ENCODE measurements at regions of chr11 and their contacts with region 1.

Region 1: GRCh38 chr11:60775420-60775961 is 9.6 kb upstream of the MS4A10 start:
- DNase-seq: peak; percentile 85
- H3K4me3 ChIP-seq: peak overlapping the region in 1 of 2 experiments; percentile 45; a peak in 1 of 4 replicates
- H3K27ac ChIP-seq: no peak overlapping the region
- H3K4me1 ChIP-seq: peaks cover 3 to 6% of the 10 kb centered on the region in 2 experiments; a peak in 2 of 4 replicates
- H3K27me3 ChIP-seq: no peaks in the 10 kb centered on the region
- CTCF ChIP-seq: peak; percentile 94
- EP300 ChIP-seq: no peak
- RAD21 ChIP-seq: peak; percentile 83

Region 2: DNA sequence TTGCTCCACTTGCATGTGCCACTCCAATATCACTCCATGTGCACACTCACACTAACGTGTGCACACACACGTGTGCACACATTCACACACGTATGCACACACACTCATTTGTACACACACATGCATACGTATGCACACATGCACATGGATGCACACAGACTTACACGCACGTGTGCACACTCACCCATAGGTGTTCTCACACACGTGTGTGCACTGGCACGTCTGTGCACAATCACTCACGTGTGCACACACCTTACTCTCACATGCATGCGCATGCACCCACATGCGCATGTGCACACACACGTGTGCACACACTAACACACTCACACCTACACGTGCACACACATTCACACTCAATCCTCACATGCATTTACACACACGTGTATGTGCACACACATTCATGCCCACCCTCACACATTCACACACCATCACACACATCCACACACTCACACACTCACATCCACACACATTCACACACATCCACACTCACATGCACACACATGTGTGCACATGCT is 28.1 kb before region 1 on chr11:
- CTCF ChIA-PET with region 1: interaction called, 10 read pairs
- POLR2A ChIA-PET with region 1: no interaction called
- DNase-seq: no peak
- H3K4me3 ChIP-seq: no peak overlapping the region
- H3K27ac ChIP-seq: no peak overlapping the region
- H3K4me1 ChIP-seq: no peaks in the 10 kb centered on the region
- H3K27me3 ChIP-seq: peaks cover 23% of the 10 kb centered on the region; the same call in 1 of the 2 replicates
- CTCF ChIP-seq: no peak
- EP300 ChIP-seq: no peak
- RAD21 ChIP-seq: no peak

Region 3: GRCh38 chr11:60762851-60763691 is 12.4 kb before region 1 on chr11:
- CTCF ChIA-PET with region 1: interaction called, 67 read pairs
- POLR2A ChIA-PET with region 1: no interaction called
- DNase-seq: no peak
- H3K4me3 ChIP-seq: no peak overlapping the region
- H3K27ac ChIP-seq: no peak overlapping the region
- H3K4me1 ChIP-seq: no peaks in the 10 kb centered on the region; a peak in 1 of 4 replicates
- H3K27me3 ChIP-seq: peaks cover 68% of the 10 kb centered on the region
- CTCF ChIP-seq: peak; percentile 49
- EP300 ChIP-seq: no peak
- RAD21 ChIP-seq: no peak

Region 4: GRCh38 chr11:60795291-60795690 is 19.8 kb after region 1 on chr11:
- CTCF ChIA-PET with region 1: interaction called, 11 read pairs
- POLR2A ChIA-PET with region 1: no interaction called
- DNase-seq: no peak
- H3K4me3 ChIP-seq: no peak overlapping the region
- H3K27ac ChIP-seq: no peak overlapping the region
- H3K4me1 ChIP-seq: no peaks in the 10 kb centered on the region
- H3K27me3 ChIP-seq: peaks cover 27% of the 10 kb centered on the region; the same call in 1 of the 2 replicates
- CTCF ChIP-seq: no peak
- EP300 ChIP-seq: no peak
- RAD21 ChIP-seq: no peak

Region 5: GRCh38 chr11:60887556-60887955 is 112.1 kb after region 1 on chr11:
- CTCF ChIA-PET with region 1: interaction called, 28 read pairs
- POLR2A ChIA-PET with region 1: no interaction called
- DNase-seq: peak; percentile 63
- H3K4me3 ChIP-seq: no peak overlapping the region; a peak in 1 of 4 replicates
- H3K27ac ChIP-seq: no peak overlapping the region
- H3K4me1 ChIP-seq: peaks cover 0 to 11% of the 10 kb centered on the region in 2 experiments; a peak in 1 of 4 replicates
- H3K27me3 ChIP-seq: no peaks in the 10 kb centered on the region
- CTCF ChIP-seq: peak; percentile 67
- EP300 ChIP-seq: no peak
- RAD21 ChIP-seq: peak; percentile 82